Esophagus muscularis mucosa (tissue), 4 donors: ENCODE measurements at regions of chr15 and their contacts with region 1.

Region 1: DNA sequence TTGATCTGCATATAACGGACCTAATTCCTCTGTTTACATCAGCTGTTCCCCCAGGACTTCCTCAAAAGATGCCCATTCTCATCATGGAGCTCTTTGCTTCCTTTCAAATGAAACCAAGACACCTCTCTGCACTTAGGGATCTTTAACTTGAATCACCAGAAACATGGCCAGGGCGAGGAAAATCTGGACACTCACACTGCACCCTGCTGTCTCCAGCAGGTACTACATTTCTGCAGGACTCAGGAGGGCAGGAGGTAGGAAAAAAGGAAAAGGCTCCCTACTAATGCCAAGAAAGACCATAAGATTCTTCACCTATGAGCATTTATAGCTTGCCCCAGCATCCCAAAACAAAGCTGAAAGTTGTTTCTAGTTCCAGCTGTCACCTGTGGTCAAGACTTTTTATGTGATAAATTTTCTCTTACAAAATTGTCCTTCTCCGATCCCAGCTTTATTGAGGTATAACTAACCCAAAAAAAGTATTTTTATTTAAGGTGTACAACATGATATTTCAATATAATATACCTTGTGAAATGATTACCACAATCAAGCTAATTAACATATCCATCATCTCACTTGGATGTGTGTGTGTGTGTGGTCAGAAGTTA is 87.3 kb upstream of the C15orf61 start:
- DNase-seq: no peak
- H3K4me3 ChIP-seq: no peak overlapping the region
- H3K27ac ChIP-seq: no peak overlapping the region
- H3K4me1 ChIP-seq: no peaks in the 10 kb centered on the region
- H3K27me3 ChIP-seq: no peaks in the 10 kb centered on the region
- CTCF ChIP-seq: peak; percentile 72 to 85 (median 72)
- EP300 ChIP-seq: no peak
- POLR2A ChIP-seq: no peak

Region 2: DNA sequence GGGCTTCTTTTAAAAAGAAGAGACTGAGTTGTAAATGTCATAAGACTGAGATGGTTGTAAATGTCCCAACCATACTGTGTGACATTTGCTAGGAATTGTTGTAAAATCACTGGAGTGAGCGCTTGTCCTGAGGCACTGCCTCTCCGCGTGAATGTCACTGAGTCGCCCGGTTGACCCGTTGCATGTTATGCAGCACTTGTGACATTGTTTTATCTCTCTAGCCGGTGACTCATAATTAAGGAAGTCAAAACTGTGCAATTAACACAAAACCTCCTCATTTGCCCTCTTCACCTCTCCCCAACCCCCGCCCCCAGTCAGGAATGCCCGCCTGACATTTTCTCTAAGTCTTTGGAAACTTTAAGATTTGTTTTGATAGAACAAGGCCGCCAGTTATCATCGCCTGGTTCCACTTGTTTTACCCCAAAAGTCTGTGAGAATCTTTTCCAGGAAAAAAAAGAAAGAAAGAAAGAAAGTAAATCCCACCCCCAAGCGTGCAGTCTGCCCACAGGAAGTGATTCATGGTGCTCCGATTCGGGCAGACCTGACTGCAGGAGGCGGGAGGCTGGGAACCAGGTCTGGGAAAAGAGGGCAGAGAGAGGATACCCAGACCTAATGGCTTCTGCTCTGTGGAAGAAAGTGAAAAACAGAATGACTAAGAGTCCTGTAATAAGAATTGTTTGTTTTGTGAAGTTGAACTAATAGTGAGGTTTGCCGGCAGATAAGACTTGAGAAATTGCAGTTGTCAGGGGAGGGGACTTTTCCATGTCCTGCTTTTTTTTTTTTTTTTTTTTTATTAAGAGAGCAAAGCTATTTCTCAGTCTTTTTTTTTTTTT is 283.4 kb before region 1 on chr15:
- intact Hi-C with region 1: loop called (anchors 10 kb)
- DNase-seq: no peak
- H3K4me3 ChIP-seq: peak overlapping the region in 3 of 4 donors; percentile 0 to 27 (median 11)
- H3K27ac ChIP-seq: peak overlapping the region; percentile 50 to 87 (median 85)
- H3K4me1 ChIP-seq: peaks cover 53 to 74% (median 71%) of the 10 kb centered on the region in 4 donors
- H3K27me3 ChIP-seq: no peaks in the 10 kb centered on the region
- CTCF ChIP-seq: no peak
- EP300 ChIP-seq: no peak
- POLR2A ChIP-seq: no peak

Region 3: GRCh38 chr15:67240235-67241131 is 193.1 kb before region 1 on chr15:
- intact Hi-C with region 1: loop called (anchors 10 kb)
- DNase-seq: no peak
- H3K4me3 ChIP-seq: no peak overlapping the region
- H3K27ac ChIP-seq: no peak overlapping the region
- H3K4me1 ChIP-seq: peaks cover 0 to 33% (median 17%) of the 10 kb centered on the region in 4 donors
- H3K27me3 ChIP-seq: no peaks in the 10 kb centered on the region
- CTCF ChIP-seq: peak in 1 of 3 experiments; percentile 19
- EP300 ChIP-seq: no peak
- POLR2A ChIP-seq: no peak

Region 4: DNA sequence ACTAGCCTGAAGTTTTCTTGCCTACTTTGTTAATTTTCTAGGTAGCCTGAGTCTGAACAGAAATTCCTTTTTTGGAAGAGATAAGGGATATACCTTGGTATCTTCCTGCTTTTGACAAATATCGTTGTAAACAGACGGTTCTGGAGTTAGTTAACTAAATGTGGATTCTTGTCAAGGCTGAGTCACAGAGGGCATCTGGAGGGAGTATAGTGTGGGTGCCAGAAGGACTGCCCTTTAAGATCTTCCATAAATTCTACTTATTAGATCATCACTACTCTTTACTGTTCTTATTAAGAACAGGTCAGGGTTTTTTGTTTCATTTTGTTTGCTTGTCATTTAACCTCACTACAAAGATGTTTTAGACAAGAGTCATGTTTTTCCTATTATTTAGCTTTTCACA is 266.4 kb after region 1 on chr15:
- intact Hi-C with region 1: no loop called
- DNase-seq: no peak
- H3K4me3 ChIP-seq: no peak overlapping the region
- H3K27ac ChIP-seq: no peak overlapping the region
- H3K4me1 ChIP-seq: no peaks in the 10 kb centered on the region
- H3K27me3 ChIP-seq: no peaks in the 10 kb centered on the region
- CTCF ChIP-seq: no peak
- EP300 ChIP-seq: no peak
- POLR2A ChIP-seq: no peak